ENCODE measurements at regions of chr7 and their contacts with region 1.

Region 1: DNA sequence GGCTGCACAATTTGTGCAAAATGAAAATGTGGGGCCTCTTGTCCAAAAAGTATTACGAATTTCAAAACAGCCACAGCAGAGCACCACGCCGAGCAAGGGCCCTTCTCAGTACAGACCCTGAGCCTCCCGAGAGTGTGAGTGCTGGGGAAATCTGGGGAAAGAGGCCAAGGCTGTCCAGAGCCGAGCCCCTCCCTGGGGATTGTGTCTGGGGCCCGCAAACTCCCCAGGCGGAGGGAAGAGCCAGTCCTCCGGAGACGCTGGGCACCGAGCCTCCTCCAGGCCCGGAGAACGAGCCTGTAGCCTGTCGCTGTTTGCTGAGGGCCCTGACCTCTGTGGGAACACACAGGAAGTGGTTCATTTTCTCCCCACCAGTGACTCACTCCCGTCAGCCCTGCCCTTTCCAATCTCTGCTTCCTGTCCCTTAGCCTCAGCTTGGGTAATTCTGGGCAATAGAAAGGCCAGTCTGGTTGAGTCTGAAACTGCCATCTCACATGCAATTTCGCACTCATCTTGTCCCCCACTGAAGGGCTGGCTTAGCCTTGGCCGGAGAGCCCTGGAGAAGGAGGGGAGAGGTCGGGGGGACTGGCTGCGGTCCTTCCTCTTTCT is 19.5 kb upstream of the GNA12 start:
- DNase-seq: peak; percentile 97
- H3K4me3 ChIP-seq: peak overlapping the region; percentile 54
- H3K27ac ChIP-seq: peak overlapping the region; percentile 95
- H3K4me1 ChIP-seq: peaks cover 15% of the 10 kb centered on the region
- H3K27me3 ChIP-seq: no peaks in the 10 kb centered on the region

Region 2: GRCh38 chr7:2586326-2587020 is 277.1 kb before region 1 on chr7:
- in situ Hi-C with region 1: no loop called
- DNase-seq: no peak
- H3K4me3 ChIP-seq: no peak overlapping the region
- H3K27ac ChIP-seq: no peak overlapping the region
- H3K4me1 ChIP-seq: no peaks in the 10 kb centered on the region
- H3K27me3 ChIP-seq: no peaks in the 10 kb centered on the region

Region 3: GRCh38 chr7:4610768-4611467 is 1747.4 kb after region 1 on chr7:
- in situ Hi-C with region 1: loop called (anchors 25 kb)
- DNase-seq: peak; percentile 78
- H3K4me3 ChIP-seq: no peak overlapping the region
- H3K27ac ChIP-seq: no peak overlapping the region
- H3K4me1 ChIP-seq: peaks cover 14% of the 10 kb centered on the region
- H3K27me3 ChIP-seq: peaks cover 6% of the 10 kb centered on the region; the same call in 1 of the 2 replicates

Measured in GM23248 (cell line).